Transverse colon (tissue), 4 donors: ENCODE measurements at regions of chr14 and their contacts with region 1.

Region 1: DNA sequence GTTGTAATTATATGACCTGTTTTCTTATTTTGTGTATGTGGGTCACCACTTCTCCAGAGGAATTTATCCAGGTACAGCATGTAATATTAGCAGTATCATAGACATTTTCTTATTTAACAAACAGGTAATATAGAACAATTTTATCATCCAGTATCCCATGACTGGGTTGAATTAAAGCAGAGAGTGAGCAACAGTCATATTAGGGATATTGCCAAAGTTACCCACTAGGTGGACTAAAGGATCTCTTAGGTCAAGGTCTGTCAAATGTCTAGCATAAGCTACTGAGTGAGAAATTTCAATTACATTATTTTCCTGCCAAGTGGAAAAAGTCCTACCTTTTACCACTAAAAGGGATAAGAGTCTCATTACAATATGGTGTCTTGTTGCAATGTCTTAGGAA is 62.1 kb upstream of the TRIM9 start:
- DNase-seq: no peak
- H3K4me3 ChIP-seq: no peak overlapping the region
- H3K27ac ChIP-seq: no peak overlapping the region
- H3K4me1 ChIP-seq: no peaks in the 10 kb centered on the region
- H3K27me3 ChIP-seq: no peaks in the 10 kb centered on the region
- CTCF ChIP-seq: peak in 4 of 5 experiments; percentile 15 to 29 (median 24)
- EP300 ChIP-seq: no peak
- POLR2A ChIP-seq: no peak

Region 2: DNA sequence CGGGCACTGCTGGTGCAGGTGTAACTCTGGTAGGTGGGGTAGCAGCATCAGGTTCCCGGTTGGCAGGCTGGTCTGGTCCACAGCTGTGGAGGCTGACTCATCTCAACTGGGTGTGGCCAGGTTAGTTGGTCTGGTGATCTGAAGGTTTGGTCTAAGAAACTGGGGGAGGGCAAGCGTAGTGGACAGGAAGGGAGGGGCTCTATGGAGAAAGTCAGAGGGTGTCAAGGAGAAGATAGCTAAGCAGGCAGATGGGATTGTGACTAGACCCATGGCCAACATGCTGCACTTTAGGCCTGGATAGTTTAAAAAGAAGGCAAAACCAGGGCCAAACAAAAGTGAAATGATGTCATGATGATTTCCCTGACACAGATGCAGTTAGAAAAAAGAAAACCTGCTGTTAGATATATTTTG is 70.0 kb before region 1 on chr14:
- in situ Hi-C with region 1: no loop called
- intact Hi-C with region 1: loop called (anchors 2 kb)
- DNase-seq: peak; percentile 83
- H3K4me3 ChIP-seq: no peak overlapping the region
- H3K27ac ChIP-seq: peak overlapping the region in 3 of 4 donors; percentile 25 to 71 (median 70)
- H3K4me1 ChIP-seq: peaks cover 0 to 27% (median 10%) of the 10 kb centered on the region in 4 donors
- H3K27me3 ChIP-seq: no peaks in the 10 kb centered on the region
- CTCF ChIP-seq: no peak
- EP300 ChIP-seq: no peak
- POLR2A ChIP-seq: no peak

Region 3: DNA sequence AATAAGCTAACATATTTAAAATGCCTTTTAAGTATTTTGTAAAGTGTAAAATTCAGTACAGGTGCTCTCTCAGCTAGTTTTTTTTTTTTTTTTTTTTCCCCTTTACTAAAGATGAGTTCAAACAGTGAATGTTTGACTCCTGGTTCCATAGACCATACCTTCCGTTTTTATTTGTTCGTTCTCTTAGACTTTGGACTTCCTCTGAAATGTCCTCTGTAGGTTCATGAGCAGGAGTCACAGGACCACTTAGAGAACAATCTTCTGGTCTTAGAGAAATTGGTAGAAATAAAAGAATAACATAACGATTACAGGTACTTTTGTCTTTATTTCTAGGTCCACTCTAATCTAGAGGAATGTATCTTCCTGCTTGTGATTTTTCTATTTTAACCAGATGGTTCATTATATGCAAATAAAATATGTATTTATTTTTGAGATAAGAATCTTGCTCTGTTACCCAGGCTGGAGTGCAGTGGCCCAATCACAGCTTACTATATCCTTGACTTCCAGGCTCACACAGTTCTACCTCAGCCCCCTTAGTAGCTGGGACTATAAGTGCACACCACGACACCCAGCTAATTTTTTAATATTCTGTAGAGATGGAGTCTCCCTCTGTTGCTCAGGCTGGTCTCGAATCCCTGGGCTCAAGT is 1598.7 kb after region 1 on chr14:
- in situ Hi-C with region 1: no loop called
- intact Hi-C with region 1: loop called (anchors 5 kb)
- DNase-seq: no peak
- H3K4me3 ChIP-seq: no peak overlapping the region
- H3K27ac ChIP-seq: no peak overlapping the region
- H3K4me1 ChIP-seq: no peaks in the 10 kb centered on the region
- H3K27me3 ChIP-seq: no peaks in the 10 kb centered on the region
- CTCF ChIP-seq: no peak
- EP300 ChIP-seq: no peak
- POLR2A ChIP-seq: no peak